Ovary (tissue), 10 donors: ENCODE measurements at regions of chrX and their contacts with region 1.

Region 1: GRCh38 chrX:33053001-33053400 is 158.3 kb downstream of the DMD start:
- DNase-seq: no peak
- H3K4me3 ChIP-seq: no peak overlapping the region
- H3K27ac ChIP-seq: no peak overlapping the region
- H3K4me1 ChIP-seq: peaks cover 1% of the 10 kb centered on the region
- H3K27me3 ChIP-seq: no peaks in the 10 kb centered on the region
- CTCF ChIP-seq: no peak
- EP300 ChIP-seq: no peak
- POLR2A ChIP-seq: no peak

Region 2: GRCh38 chrX:33014086-33014485 is 38.9 kb before region 1 on chrX:
- intact Hi-C with region 1: no loop called
- DNase-seq: no peak
- H3K4me3 ChIP-seq: no peak overlapping the region
- H3K27ac ChIP-seq: no peak overlapping the region
- H3K4me1 ChIP-seq: no peaks in the 10 kb centered on the region
- H3K27me3 ChIP-seq: no peaks in the 10 kb centered on the region
- CTCF ChIP-seq: no peak
- EP300 ChIP-seq: no peak
- POLR2A ChIP-seq: no peak

Region 3: DNA sequence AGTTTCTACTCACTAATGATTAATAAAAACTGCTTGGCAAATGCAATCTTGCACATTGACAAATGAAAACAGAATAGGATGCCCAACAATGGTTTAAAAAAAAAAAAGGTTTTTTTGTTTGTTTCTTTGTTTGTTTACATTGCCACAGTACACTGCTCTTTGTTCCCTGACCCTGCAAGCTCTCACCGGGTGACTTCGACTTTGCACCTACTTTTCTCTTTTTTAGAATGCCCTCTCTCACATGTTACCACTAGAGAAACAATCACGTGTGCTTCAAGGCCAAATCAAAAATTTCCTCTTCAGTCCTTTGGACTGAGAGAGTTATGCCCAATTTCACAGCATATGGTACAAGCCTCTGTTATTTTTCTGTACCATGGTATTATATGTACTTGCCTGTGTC is 56.9 kb after region 1 on chrX:
- intact Hi-C with region 1: no loop called
- DNase-seq: no peak
- H3K4me3 ChIP-seq: no peak overlapping the region
- H3K27ac ChIP-seq: no peak overlapping the region
- H3K4me1 ChIP-seq: no peaks in the 10 kb centered on the region
- H3K27me3 ChIP-seq: no peaks in the 10 kb centered on the region
- CTCF ChIP-seq: no peak
- EP300 ChIP-seq: no peak
- POLR2A ChIP-seq: no peak

Region 4: GRCh38 chrX:33138677-33139249 is 85.8 kb after region 1 on chrX:
- intact Hi-C with region 1: loop called in 1 of 4 experiments (anchors 10 kb)
- DNase-seq: no peak
- H3K4me3 ChIP-seq: no peak overlapping the region
- H3K27ac ChIP-seq: no peak overlapping the region
- H3K4me1 ChIP-seq: no peaks in the 10 kb centered on the region
- H3K27me3 ChIP-seq: no peaks in the 10 kb centered on the region
- CTCF ChIP-seq: no peak
- EP300 ChIP-seq: no peak
- POLR2A ChIP-seq: no peak